ENCODE measurements at regions of chr6 and their contacts with region 1.

Region 1: GRCh38 chr6:40999569-40999968 is 39.5 kb downstream of the UNC5CL start:
- DNase-seq: no peak
- ATAC-seq: no peak
- H3K4me3 ChIP-seq: no peak overlapping the region
- H3K27ac ChIP-seq: peak overlapping the region; percentile 98
- H3K4me1 ChIP-seq: peaks cover 40% of the 10 kb centered on the region
- H3K27me3 ChIP-seq: no peaks in the 10 kb centered on the region
- CTCF ChIP-seq: peak; percentile 47

Region 2: DNA sequence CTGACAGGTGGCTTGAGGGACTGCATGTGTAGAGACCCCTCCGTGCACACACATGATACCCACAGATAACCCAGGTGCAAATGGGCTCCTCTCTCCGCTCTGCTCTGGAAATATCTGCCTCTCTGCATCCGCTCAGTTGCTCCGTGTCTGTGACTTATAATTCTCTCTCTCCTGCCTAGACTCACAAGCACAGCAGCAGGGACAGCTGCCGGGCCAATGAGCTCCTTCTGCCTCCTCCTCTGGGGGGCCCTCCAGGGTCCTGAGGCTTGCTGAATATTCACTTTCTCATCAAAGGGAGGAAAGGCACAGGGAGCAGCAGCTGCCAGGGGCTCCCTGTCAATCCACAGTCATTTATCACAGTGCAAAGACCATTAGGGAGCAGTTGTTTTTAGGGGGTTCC is 436.5 kb before region 1 on chr6:
- CTCF ChIA-PET with region 1: no interaction called
- POLR2A ChIA-PET with region 1: no interaction called
- in situ Hi-C with region 1: no loop called
- intact Hi-C with region 1: no loop called
- DNase-seq: no peak
- ATAC-seq: no peak
- H3K4me3 ChIP-seq: no peak overlapping the region
- H3K27ac ChIP-seq: no peak overlapping the region
- H3K4me1 ChIP-seq: no peaks in the 10 kb centered on the region
- H3K27me3 ChIP-seq: peaks cover 2% of the 10 kb centered on the region; the same call in 1 of the 2 replicates
- CTCF ChIP-seq: no peak

Region 3: GRCh38 chr6:40762981-40763380 is 236.6 kb before region 1 on chr6:
- CTCF ChIA-PET with region 1: interaction called, 10 read pairs
- POLR2A ChIA-PET with region 1: no interaction called
- in situ Hi-C with region 1: no loop called
- intact Hi-C with region 1: no loop called
- DNase-seq: no peak
- ATAC-seq: no peak
- H3K4me3 ChIP-seq: no peak overlapping the region
- H3K27ac ChIP-seq: no peak overlapping the region
- H3K4me1 ChIP-seq: no peaks in the 10 kb centered on the region
- H3K27me3 ChIP-seq: no peaks in the 10 kb centered on the region
- CTCF ChIP-seq: no peak

Region 4: GRCh38 chr6:40915179-40915578 is 84.4 kb before region 1 on chr6:
- CTCF ChIA-PET with region 1: interaction called, 8 read pairs
- POLR2A ChIA-PET with region 1: interaction called, 10 read pairs
- in situ Hi-C with region 1: no loop called
- intact Hi-C with region 1: no loop called
- DNase-seq: no peak
- ATAC-seq: no peak
- H3K4me3 ChIP-seq: no peak overlapping the region
- H3K27ac ChIP-seq: peak overlapping the region; percentile 78
- H3K4me1 ChIP-seq: peaks cover 12% of the 10 kb centered on the region
- H3K27me3 ChIP-seq: no peaks in the 10 kb centered on the region
- CTCF ChIP-seq: no peak

Region 5: GRCh38 chr6:40986364-40986763 is 13.2 kb before region 1 on chr6:
- CTCF ChIA-PET with region 1: no interaction called
- POLR2A ChIA-PET with region 1: interaction called, 19 read pairs
- in situ Hi-C with region 1: no loop called
- intact Hi-C with region 1: no loop called
- DNase-seq: no peak
- ATAC-seq: peak; percentile 58; the same call in 1 of the 2 replicates
- H3K4me3 ChIP-seq: no peak overlapping the region
- H3K27ac ChIP-seq: peak overlapping the region; percentile 98
- H3K4me1 ChIP-seq: peaks cover 14% of the 10 kb centered on the region
- H3K27me3 ChIP-seq: no peaks in the 10 kb centered on the region
- CTCF ChIP-seq: no peak

Region 6: GRCh38 chr6:41066867-41067304 is 67.3 kb after region 1 on chr6:
- CTCF ChIA-PET with region 1: interaction called, 15 read pairs
- POLR2A ChIA-PET with region 1: no interaction called
- in situ Hi-C with region 1: no loop called
- intact Hi-C with region 1: no loop called
- DNase-seq: no peak
- ATAC-seq: 0 out of 2 replicates have a peak, but pooled peaks have one; percentile 35
- H3K4me3 ChIP-seq: no peak overlapping the region
- H3K27ac ChIP-seq: no peak overlapping the region
- H3K4me1 ChIP-seq: peaks cover 13% of the 10 kb centered on the region
- H3K27me3 ChIP-seq: no peaks in the 10 kb centered on the region
- CTCF ChIP-seq: peak; percentile 82